ENCODE measurements at regions of chr3 and their contacts with region 1.

Region 1: DNA sequence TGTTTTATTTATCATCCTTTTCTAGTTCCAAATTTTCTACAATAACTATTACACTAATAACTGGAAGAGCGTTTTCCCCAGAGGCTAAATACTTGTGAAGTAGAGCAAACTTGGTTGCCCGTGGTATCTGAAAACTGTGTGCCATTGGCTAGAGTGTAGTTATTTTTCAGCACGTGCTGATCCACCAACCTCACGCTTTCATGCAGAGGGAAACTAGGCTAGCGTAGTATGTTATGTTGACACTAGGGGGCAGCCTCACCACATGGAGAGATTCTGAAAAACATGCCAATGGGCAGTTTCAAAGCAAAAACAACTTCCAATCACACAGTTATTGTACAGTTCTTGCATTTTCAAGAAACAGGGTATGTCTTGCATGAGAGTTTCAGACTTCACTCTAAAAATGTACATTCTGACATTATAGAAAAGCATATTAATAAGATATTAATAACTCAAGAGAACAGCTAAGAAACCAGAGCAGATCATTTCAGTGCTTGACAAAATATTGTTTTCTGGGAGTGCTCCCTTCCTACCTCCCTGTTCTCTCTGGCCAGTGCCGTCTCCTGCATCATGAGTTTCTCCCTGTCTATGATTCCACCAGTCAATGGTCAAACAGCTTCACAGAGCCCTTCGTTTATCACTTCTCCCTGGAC is 39.7 kb downstream of the SPATA12 start:
- DNase-seq: no peak

Region 2: GRCh38 chr3:57169872-57170623 is 69.9 kb after region 1 on chr3:
- intact Hi-C with region 1: loop called in 1 of 2 experiments (anchors 5 kb)
- DNase-seq: peak; percentile 88